ENCODE measurements at regions of chr22 and their contacts with region 1.

Region 1: DNA sequence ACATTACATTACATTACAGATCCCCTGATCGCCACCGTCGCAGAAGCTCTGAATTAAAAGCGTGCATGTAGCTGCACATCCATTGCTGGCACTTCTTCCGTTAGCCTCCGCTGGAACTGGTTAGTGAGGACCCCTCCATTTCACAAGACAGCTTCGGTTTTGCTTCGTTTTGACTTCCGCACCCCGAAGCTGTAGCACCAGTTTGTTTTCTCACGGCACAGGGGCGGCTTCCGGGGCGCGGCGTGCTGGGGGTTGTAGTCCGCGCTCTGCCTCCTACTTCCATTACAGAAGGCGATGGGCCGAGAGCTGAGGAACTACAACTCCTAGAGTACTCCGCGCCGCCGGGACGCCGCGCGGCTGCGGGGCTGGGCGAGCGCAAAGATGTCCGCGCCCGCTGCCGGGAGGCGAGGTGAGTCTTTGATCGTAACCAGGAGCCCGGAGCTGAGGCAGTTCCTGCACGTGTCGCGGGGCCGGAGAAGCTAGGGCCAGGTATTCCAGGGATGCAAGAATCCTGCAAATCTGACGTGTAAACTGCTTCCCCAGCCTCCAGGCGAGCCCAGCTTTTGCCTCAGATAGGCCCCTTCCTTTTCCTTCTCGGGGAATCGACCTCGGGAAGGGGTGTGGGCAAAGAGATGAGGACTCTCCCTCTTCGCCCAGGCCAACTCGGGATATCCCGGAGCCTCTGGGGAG is at the start of gene PEX26:
- DNase-seq: peak; percentile 91 to 95
- ATAC-seq: peak; percentile 95 to 99 (median 98)
- H3K4me3 ChIP-seq: peak within 1 kb of the TSS; percentile 80 to 99 (median 93)
- H3K27ac ChIP-seq: peak within 1 kb of the TSS; percentile 23 to 91 (median 86)
- H3K4me1 ChIP-seq: peaks cover 9 to 38% (median 29%) of the 10 kb centered on the region in 9 donors
- H3K27me3 ChIP-seq: no peaks in the 10 kb centered on the region
- CTCF ChIP-seq: no peak
- total RNA-seq, gene PEX26: 16.6 to 27.1 (median 21.3) TPM

Region 2: DNA sequence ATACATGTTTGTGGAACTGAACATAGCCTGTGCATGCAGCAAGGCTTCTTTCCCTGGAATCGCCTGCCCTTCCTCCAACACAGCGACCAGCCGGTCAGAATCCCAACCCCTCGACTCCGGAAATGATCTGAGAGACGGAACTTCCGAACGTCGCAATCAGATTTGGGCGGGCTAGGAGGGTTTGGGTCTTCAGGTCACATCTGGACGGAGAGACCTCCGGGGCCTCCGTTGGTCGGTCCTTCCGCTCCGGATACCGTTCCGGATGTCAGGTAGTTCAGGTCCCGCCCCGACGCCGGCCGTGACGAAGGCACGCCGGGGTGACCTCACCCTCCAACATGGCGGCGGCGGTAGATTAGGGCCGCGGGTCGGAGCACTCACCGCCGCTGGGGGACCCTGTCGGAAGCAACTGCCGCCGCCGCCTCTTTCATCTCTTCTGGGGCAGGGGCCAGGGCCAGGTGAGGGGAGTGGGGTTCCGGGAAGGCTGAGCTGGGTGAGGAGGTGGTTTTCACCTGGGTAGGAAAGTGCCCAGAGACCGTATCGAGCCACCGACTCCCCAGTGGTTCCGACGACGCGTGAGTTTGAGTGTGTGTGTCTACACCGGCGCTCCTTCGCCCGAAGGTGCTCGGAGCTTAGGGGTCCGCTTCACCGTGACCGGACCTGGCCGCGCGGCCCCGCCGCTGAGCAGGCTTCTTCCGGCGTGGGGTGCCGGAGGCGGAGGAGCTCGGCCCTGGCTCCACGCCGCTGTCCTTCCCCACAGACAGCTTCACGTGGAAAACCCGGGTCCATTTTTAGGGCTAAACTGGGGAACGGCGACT is 439.1 kb before region 1 on chr22 and contains the start of gene BCL2L13:
- intact Hi-C with region 1: loop called in 1 of 10 experiments (anchors 10 kb)
- DNase-seq: peak; percentile 91
- ATAC-seq: peak; percentile 97 to 99 (median 98)
- H3K4me3 ChIP-seq: peak within 1 kb of the TSS; percentile 52 to 92 (median 76)
- H3K27ac ChIP-seq: peak within 1 kb of the TSS; percentile 93 to 100 (median 98)
- H3K4me1 ChIP-seq: peaks cover 3 to 27% (median 24%) of the 10 kb centered on the region in 9 donors
- H3K27me3 ChIP-seq: no peaks in the 10 kb centered on the region
- CTCF ChIP-seq: peak in 1 of 9 donors; percentile 17
- total RNA-seq, gene BCL2L13: 75.9 to 113 (median 91.2) TPM

Region 3: GRCh38 chr22:17830043-17830961 is 247.5 kb before region 1 on chr22:
- intact Hi-C with region 1: loop called (anchors 1 to 5 kb)
- DNase-seq: peak; percentile 83 to 85
- ATAC-seq: peak; percentile 62 to 88 (median 80)
- H3K4me3 ChIP-seq: peak overlapping the region in 1 of 10 donors; percentile 4
- H3K27ac ChIP-seq: peak overlapping the region in 8 of 10 donors; percentile 54 to 81 (median 72)
- H3K4me1 ChIP-seq: peaks cover 18 to 53% (median 41%) of the 10 kb centered on the region in 9 donors
- H3K27me3 ChIP-seq: no peaks in the 10 kb centered on the region
- CTCF ChIP-seq: peak; percentile 97 to 100 (median 100)

Region 4: DNA sequence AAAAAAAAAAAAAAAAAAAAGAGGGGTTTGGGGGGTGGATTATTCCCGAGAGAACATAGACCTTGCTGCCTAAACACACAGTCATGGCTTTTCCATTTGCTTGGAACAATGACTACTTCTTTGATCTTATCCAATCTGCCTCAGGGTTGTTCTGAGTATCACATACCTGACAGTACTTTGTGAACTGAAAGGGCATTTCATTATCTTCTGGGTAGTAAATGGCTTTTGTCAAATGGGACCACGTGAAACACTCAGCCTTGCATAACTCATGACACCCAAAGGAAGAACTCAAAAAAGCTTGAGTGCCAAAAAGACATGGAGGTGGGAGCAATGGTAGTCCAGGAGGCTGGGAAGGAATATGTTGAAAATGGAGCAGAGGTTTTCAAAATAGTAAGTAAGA is 180.4 kb before region 1 on chr22:
- intact Hi-C with region 1: loop called in 6 of 10 experiments (anchors 5 to 10 kb)
- DNase-seq: no peak
- ATAC-seq: peak in 5 of 8 donors; percentile 37 to 62 (median 40)
- H3K4me3 ChIP-seq: no peak overlapping the region
- H3K27ac ChIP-seq: peak overlapping the region in 7 of 10 donors; percentile 28 to 59 (median 46)
- H3K4me1 ChIP-seq: peaks cover 0 to 30% (median 7%) of the 10 kb centered on the region in 9 donors
- H3K27me3 ChIP-seq: no peaks in the 10 kb centered on the region
- CTCF ChIP-seq: no peak

Region 5: DNA sequence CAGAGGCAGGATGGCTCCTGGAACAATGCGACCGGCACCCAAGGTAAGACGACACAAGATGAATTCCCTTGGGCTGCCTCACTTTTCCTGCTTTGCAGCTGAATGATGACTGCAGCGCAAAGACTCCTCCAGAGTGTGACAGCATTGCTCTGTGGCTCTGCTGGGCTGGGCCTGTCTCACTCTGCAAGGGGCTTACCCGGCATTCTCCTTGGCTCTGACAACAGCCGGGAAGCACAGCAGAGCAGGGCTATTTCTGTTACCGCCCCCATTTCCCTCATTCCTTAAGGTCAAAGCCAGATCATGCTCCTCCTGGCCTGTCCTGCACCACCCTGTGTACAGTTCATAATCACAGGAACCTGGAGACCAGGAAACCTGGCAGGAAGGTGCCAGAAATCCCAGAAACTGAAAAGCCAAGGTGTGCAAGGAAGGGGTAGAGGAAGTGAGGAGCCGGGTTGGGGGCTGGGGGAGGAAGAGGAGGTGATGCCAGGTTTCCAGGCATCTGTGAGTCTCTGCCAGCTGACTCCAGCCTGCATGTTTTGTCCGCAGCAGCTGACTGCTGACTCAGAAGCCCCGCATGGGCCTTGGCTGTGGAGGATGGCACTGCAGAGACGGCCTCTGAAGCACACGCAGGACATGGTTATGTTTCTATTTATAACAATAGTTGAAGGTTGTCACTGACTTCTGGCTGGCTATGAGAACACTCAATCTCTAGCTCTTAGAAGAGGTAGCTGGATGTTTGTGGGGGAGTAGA is 167.0 kb before region 1 on chr22:
- intact Hi-C with region 1: loop called in 8 of 10 experiments (anchors 1 to 10 kb)
- DNase-seq: peak; percentile 69 to 83
- ATAC-seq: peak; percentile 87 to 96 (median 94)
- H3K4me3 ChIP-seq: peak overlapping the region in 2 of 10 donors; percentile 2 to 8
- H3K27ac ChIP-seq: peak overlapping the region; percentile 79 to 96 (median 85)
- H3K4me1 ChIP-seq: peaks cover 17 to 99% (median 69%) of the 10 kb centered on the region in 9 donors
- H3K27me3 ChIP-seq: no peaks in the 10 kb centered on the region
- CTCF ChIP-seq: peak in 8 of 9 donors; percentile 24 to 82 (median 53)

Region 6: GRCh38 chr22:18024276-18024947 is 53.4 kb before region 1 on chr22 and contains the start of gene MICAL3:
- intact Hi-C with region 1: loop called in 3 of 10 experiments (anchors 5 to 10 kb)
- DNase-seq: peak in 1 of 2 donors; percentile 66
- ATAC-seq: peak; percentile 74 to 92 (median 88)
- H3K4me3 ChIP-seq: peak within 1 kb of the TSS; percentile 49 to 85 (median 80)
- H3K27ac ChIP-seq: peak within 1 kb of the TSS; percentile 35 to 95 (median 78)
- H3K4me1 ChIP-seq: peaks cover 0 to 36% (median 17%) of the 10 kb centered on the region in 9 donors
- H3K27me3 ChIP-seq: peaks cover 0 to 59% (median 0%) of the 10 kb centered on the region in 7 donors
- CTCF ChIP-seq: peak; percentile 39 to 83 (median 72)
- total RNA-seq, gene MICAL3: 74.7 to 137 (median 112) TPM

Region 7: GRCh38 chr22:18133452-18133851 is 55.7 kb after region 1 on chr22:
- intact Hi-C with region 1: no loop called
- DNase-seq: no peak
- ATAC-seq: peak; percentile 16 to 79 (median 55)
- H3K4me3 ChIP-seq: no peak overlapping the region
- H3K27ac ChIP-seq: peak overlapping the region in 2 of 10 donors; percentile 25 to 30
- H3K4me1 ChIP-seq: peaks cover 0 to 20% (median 18%) of the 10 kb centered on the region in 9 donors
- H3K27me3 ChIP-seq: no peaks in the 10 kb centered on the region
- CTCF ChIP-seq: no peak